A673 (cell line): ENCODE measurements at regions of chr12 and their contacts with region 1.

Region 1: DNA sequence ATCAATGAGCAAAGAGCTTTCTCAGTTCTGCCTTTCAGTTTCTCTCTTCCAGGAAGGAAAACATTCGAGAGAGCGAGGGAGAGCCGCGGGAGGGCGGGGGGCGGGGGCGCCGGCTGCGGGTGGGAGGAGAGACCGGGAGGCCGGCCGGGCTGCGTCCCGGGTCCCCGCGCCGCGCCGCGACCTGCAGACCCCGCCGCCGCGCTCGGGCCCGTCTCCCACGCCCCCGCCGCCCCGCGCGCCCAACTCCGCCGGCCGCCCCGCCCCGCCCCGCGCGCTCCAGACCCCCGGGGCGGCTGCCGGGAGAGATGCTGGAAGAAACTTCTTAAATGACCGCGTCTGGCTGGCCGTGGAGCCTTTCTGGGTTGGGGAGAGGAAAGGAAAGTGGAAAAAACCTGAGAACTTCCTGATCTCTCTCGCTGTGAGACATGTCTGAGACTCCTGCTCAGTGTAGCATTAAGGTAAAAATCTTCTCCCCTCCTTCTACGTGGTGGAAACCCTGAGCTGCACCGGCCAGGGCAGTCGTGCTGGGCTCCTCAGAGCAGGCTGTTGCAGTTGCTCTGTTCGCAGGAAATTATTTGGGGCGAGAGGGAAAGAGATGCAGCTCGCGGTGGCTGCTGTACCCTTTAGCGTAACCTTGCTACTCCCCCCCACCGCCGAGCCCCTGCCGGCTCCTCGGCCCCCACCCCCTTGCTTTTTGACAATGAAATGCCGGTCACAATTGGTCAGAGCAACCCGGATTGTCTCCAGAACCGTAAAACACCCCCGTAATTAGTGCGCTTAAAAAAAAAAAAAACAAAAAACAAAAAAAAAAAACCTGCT is 438 bp downstream of the ETV6 start:
- DNase-seq: peak; percentile 67
- H3K4me3 ChIP-seq: peak overlapping the region; percentile 80
- H3K27ac ChIP-seq: peak overlapping the region; percentile 98
- H3K4me1 ChIP-seq: peaks cover 22% of the 10 kb centered on the region
- H3K27me3 ChIP-seq: no peaks in the 10 kb centered on the region
- CTCF ChIP-seq: no peak

Region 2: GRCh38 chr12:11684393-11684792 is 34.5 kb after region 1 on chr12:
- CTCF ChIA-PET with region 1: no interaction called
- POLR2A ChIA-PET with region 1: no interaction called
- intact Hi-C with region 1: no loop called
- DNase-seq: no peak
- H3K4me3 ChIP-seq: no peak overlapping the region
- H3K27ac ChIP-seq: no peak overlapping the region
- H3K4me1 ChIP-seq: peaks cover 44% of the 10 kb centered on the region
- H3K27me3 ChIP-seq: no peaks in the 10 kb centered on the region
- CTCF ChIP-seq: no peak

Region 3: DNA sequence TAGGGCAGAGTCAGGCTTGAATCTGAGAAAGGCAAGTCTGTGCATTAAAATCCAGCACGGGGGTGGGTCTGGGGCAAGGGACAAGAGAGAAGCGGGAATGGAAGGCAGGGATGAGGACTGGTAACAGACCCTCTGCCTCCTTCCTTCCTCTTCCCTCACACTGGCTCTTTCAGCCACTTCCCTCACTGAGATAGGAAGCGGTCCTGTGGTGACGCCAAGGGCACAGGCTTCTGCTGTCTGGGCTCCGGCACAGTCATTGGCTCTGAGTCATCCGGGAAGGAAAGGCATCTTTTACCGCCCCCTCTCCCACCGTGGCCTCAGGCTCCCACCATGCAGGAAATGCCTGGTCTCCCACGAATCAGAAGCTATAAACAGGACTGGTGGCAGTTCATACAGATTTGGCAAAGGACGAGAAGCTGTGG is 69.8 kb after region 1 on chr12:
- CTCF ChIA-PET with region 1: no interaction called
- POLR2A ChIA-PET with region 1: no interaction called
- intact Hi-C with region 1: loop called (anchors 5 kb)
- DNase-seq: peak; percentile 96
- H3K4me3 ChIP-seq: no peak overlapping the region
- H3K27ac ChIP-seq: peak overlapping the region; percentile 80
- H3K4me1 ChIP-seq: peaks cover 67% of the 10 kb centered on the region
- H3K27me3 ChIP-seq: no peaks in the 10 kb centered on the region
- CTCF ChIP-seq: no peak

Region 4: DNA sequence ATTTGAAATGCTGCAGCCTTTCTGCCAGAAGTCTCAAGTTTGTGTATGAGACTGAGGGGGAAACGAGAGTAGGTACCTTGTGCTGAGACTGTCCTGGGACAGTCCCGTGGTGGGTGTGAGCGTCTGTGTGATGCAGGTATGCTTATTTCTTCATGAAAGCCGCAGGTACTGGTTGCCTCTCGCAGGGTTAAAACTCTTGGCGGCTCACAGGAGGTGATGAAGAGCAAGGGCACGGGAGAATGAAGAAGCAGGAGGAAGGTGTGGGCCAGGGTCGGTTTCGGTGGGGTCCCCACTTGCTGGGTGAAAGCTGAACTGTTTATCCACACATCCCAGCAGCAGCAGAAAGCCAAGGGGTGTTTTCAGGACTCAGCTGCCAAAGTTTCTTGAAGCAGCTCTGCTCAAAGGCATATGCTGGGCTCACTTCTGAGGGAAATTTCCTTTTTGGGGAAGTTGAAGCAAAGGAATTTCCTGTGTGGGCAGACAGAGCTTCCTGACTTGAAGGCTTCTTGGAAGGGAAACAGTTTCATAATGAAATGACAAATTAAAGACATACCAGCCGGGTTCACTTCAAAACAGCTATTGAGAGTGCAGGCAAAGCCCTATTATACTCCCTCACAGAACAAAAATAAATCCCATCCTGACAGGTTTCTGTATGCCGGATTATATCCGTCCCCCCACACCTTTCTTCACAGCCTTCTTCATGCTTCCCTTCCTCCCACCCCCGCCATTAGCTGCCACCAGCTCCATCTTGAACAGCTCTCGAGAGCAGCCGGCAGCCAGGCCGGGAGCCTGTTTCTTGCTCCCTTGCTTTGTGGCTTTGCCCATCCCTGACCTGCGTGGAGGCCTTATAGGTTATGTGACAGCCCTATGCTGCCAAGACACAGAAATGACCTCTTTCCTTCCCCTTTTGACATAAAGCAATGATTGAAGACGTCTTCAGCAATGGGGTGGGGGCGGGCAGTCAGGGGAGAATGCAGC is 116.2 kb after region 1 on chr12:
- CTCF ChIA-PET with region 1: no interaction called
- POLR2A ChIA-PET with region 1: no interaction called
- intact Hi-C with region 1: loop called (anchors 10 kb)
- DNase-seq: peak; percentile 94
- H3K4me3 ChIP-seq: peak overlapping the region; percentile 24
- H3K27ac ChIP-seq: peak overlapping the region; percentile 97
- H3K4me1 ChIP-seq: peaks cover 49% of the 10 kb centered on the region
- H3K27me3 ChIP-seq: no peaks in the 10 kb centered on the region
- CTCF ChIP-seq: no peak

Region 5: GRCh38 chr12:11812586-11813427 is 162.9 kb after region 1 on chr12:
- CTCF ChIA-PET with region 1: no interaction called
- POLR2A ChIA-PET with region 1: no interaction called
- intact Hi-C with region 1: loop called (anchors 5 kb)
- DNase-seq: peak; percentile 69
- H3K4me3 ChIP-seq: peak overlapping the region; percentile 35
- H3K27ac ChIP-seq: peak overlapping the region; percentile 81
- H3K4me1 ChIP-seq: peaks cover 31% of the 10 kb centered on the region
- H3K27me3 ChIP-seq: no peaks in the 10 kb centered on the region
- CTCF ChIP-seq: peak; percentile 36; the same call in 1 of the 2 replicates

Region 6: GRCh38 chr12:11877869-11878780 is 228.2 kb after region 1 on chr12:
- CTCF ChIA-PET with region 1: no interaction called
- POLR2A ChIA-PET with region 1: no interaction called
- intact Hi-C with region 1: loop called (anchors 5 kb)
- DNase-seq: peak; percentile 84
- H3K4me3 ChIP-seq: no peak overlapping the region
- H3K27ac ChIP-seq: peak overlapping the region; percentile 73
- H3K4me1 ChIP-seq: peaks cover 49% of the 10 kb centered on the region
- H3K27me3 ChIP-seq: no peaks in the 10 kb centered on the region
- CTCF ChIP-seq: no peak

Region 7: GRCh38 chr12:12017798-12018197 is 367.9 kb after region 1 on chr12:
- CTCF ChIA-PET with region 1: no interaction called
- POLR2A ChIA-PET with region 1: no interaction called
- intact Hi-C with region 1: loop called (anchors 5 kb)
- DNase-seq: peak; percentile 60
- H3K4me3 ChIP-seq: no peak overlapping the region
- H3K27ac ChIP-seq: no peak overlapping the region
- H3K4me1 ChIP-seq: peaks cover 27% of the 10 kb centered on the region
- H3K27me3 ChIP-seq: no peaks in the 10 kb centered on the region
- CTCF ChIP-seq: peak; percentile 75